Heart left ventricle (tissue), 16 donors: ENCODE measurements at regions of chr18 and their contacts with region 1.

Region 1: GRCh38 chr18:79458131-79458838 is 62.6 kb downstream of the NFATC1 start:
- DNase-seq: peak in 4 of 5 donors; percentile 77 to 84 (median 78)
- ATAC-seq: peak; percentile 71 to 85 (median 82)
- H3K4me3 ChIP-seq: peak overlapping the region in 9 of 12 donors; percentile 15 to 41 (median 22)
- H3K27ac ChIP-seq: peak overlapping the region; percentile 63 to 90 (median 80)
- H3K4me1 ChIP-seq: peaks cover 3 to 45% (median 32%) of the 10 kb centered on the region in 12 donors
- H3K27me3 ChIP-seq: no peaks in the 10 kb centered on the region
- CTCF ChIP-seq: no peak
- POLR2A ChIP-seq: no peak

Region 2: DNA sequence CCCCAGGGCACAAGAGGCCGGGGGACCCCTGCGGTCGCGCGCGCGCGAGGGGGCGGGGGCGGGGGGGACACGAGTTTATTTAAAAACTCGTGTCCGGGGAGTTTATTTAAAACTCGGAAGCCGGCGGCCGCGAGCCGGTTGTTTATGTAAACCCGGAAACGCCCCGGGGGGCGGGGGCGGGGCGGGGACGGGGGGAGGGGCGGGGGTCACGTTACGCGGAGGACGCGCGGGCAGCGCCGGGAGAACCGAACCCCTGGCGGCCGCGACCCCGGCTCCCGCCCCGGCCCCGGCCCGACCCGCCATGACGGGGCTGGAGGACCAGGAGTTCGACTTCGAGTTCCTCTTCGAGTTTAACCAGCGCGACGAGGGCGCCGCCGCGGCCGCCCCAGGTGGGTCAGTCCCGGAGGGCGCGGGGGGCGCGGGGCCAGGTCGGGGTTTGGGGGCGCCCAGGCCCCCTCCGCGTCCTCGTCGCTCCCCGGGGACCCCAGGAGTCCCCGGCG is 58.1 kb before region 1 on chr18:
- intact Hi-C with region 1: loop called in 8 of 10 experiments (anchors 2 to 10 kb)
- DNase-seq: peak; percentile 62 to 89 (median 77)
- ATAC-seq: peak in 1 of 4 donors; percentile 18
- H3K4me3 ChIP-seq: peak overlapping the region; percentile 56 to 96 (median 81)
- H3K27ac ChIP-seq: peak overlapping the region in 11 of 12 donors; percentile 67 to 94 (median 84)
- H3K4me1 ChIP-seq: peaks cover 5 to 68% (median 49%) of the 10 kb centered on the region in 12 donors
- H3K27me3 ChIP-seq: peaks cover 0 to 9% (median 0%) of the 10 kb centered on the region in 9 donors
- CTCF ChIP-seq: no peak
- POLR2A ChIP-seq: no peak

Region 3: GRCh38 chr18:79405781-79406575 is 52.3 kb before region 1 on chr18:
- intact Hi-C with region 1: loop called in 6 of 10 experiments (anchors 2 to 10 kb)
- DNase-seq: peak; percentile 74 to 84 (median 79)
- ATAC-seq: peak; percentile 19 to 75 (median 34)
- H3K4me3 ChIP-seq: peak overlapping the region in 4 of 12 donors; percentile 14 to 45 (median 23)
- H3K27ac ChIP-seq: peak overlapping the region; percentile 39 to 93 (median 62)
- H3K4me1 ChIP-seq: peaks cover 5 to 58% (median 41%) of the 10 kb centered on the region in 12 donors
- H3K27me3 ChIP-seq: no peaks in the 10 kb centered on the region
- CTCF ChIP-seq: no peak
- POLR2A ChIP-seq: no peak

Region 4: GRCh38 chr18:79507076-79507545 is 48.8 kb after region 1 on chr18:
- intact Hi-C with region 1: loop called in 4 of 10 experiments (anchors 2 to 10 kb)
- DNase-seq: peak; percentile 81 to 90 (median 88)
- ATAC-seq: peak; percentile 91 to 93 (median 92)
- H3K4me3 ChIP-seq: peak overlapping the region in 11 of 12 donors; percentile 25 to 55 (median 44)
- H3K27ac ChIP-seq: peak overlapping the region; percentile 85 to 97 (median 92)
- H3K4me1 ChIP-seq: peaks cover 3 to 38% (median 29%) of the 10 kb centered on the region in 12 donors
- H3K27me3 ChIP-seq: no peaks in the 10 kb centered on the region
- CTCF ChIP-seq: no peak
- POLR2A ChIP-seq: no peak

Region 5: GRCh38 chr18:79528846-79529245 is 70.6 kb after region 1 on chr18:
- intact Hi-C with region 1: loop called in 1 of 10 experiments (anchors 2 kb)
- DNase-seq: peak; percentile 53 to 70 (median 67)
- ATAC-seq: peak; percentile 18 to 60 (median 42)
- H3K4me3 ChIP-seq: no peak overlapping the region
- H3K27ac ChIP-seq: no peak overlapping the region
- H3K4me1 ChIP-seq: peaks cover 0 to 21% (median 12%) of the 10 kb centered on the region in 12 donors
- H3K27me3 ChIP-seq: peaks cover 0 to 7% (median 0%) of the 10 kb centered on the region in 9 donors
- CTCF ChIP-seq: peak; percentile 83 to 95 (median 91)
- POLR2A ChIP-seq: no peak